Ascending aorta (tissue), 2 donors: ENCODE measurements at regions of chr4 and their contacts with region 1.

Region 1: GRCh38 chr4:119286377-119287002 is 35.4 kb downstream of the FABP2 start:
- DNase-seq: no peak
- H3K4me3 ChIP-seq: no peak overlapping the region
- H3K27ac ChIP-seq: peak overlapping the region; percentile 28 to 76
- H3K4me1 ChIP-seq: peaks cover 0 to 24% of the 10 kb centered on the region in 2 donors
- H3K27me3 ChIP-seq: no peaks in the 10 kb centered on the region
- CTCF ChIP-seq: peak; percentile 58 to 74 (median 71)

Region 2: DNA sequence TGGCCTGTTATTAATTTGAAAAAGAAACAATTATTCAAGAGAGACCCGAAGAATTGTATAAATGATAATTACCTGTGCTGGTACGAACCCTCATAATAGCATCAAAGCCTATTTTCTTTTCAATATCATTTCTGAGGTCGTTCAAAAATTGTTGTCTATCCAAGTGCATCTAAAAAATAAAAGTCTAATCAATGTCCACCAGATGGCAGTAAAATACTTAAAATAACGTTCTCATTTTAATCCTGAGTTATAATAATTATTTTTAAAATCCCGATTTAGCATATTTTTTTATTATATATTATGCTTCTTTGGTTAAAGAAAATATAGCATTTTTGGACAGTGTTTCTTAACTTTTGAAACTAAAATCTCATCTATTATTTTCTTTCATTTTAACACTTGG is 545.6 kb before region 1 on chr4:
- intact Hi-C with region 1: loop called (anchors 10 kb)
- DNase-seq: no peak
- H3K4me3 ChIP-seq: peak overlapping the region in 1 of 2 donors; percentile 36
- H3K27ac ChIP-seq: peak overlapping the region; percentile 29 to 50
- H3K4me1 ChIP-seq: peaks cover 0 to 9% of the 10 kb centered on the region in 2 donors
- H3K27me3 ChIP-seq: no peaks in the 10 kb centered on the region
- CTCF ChIP-seq: peak; percentile 45 to 54 (median 50)

Region 3: GRCh38 chr4:118883861-118884260 is 402.6 kb before region 1 on chr4:
- intact Hi-C with region 1: no loop called
- DNase-seq: no peak
- H3K4me3 ChIP-seq: no peak overlapping the region
- H3K27ac ChIP-seq: no peak overlapping the region
- H3K4me1 ChIP-seq: no peaks in the 10 kb centered on the region
- H3K27me3 ChIP-seq: no peaks in the 10 kb centered on the region
- CTCF ChIP-seq: peak in 1 of 3 experiments; percentile 20

Region 4: GRCh38 chr4:118981839-118982381 is 304.6 kb before region 1 on chr4:
- intact Hi-C with region 1: loop called (anchors 1 kb)
- DNase-seq: peak in 1 of 2 donors; percentile 89
- H3K4me3 ChIP-seq: no peak overlapping the region
- H3K27ac ChIP-seq: peak overlapping the region; percentile 95 to 96
- H3K4me1 ChIP-seq: peaks cover 30 to 65% of the 10 kb centered on the region in 2 donors
- H3K27me3 ChIP-seq: no peaks in the 10 kb centered on the region
- CTCF ChIP-seq: peak; percentile 68 to 90 (median 82)

Region 5: DNA sequence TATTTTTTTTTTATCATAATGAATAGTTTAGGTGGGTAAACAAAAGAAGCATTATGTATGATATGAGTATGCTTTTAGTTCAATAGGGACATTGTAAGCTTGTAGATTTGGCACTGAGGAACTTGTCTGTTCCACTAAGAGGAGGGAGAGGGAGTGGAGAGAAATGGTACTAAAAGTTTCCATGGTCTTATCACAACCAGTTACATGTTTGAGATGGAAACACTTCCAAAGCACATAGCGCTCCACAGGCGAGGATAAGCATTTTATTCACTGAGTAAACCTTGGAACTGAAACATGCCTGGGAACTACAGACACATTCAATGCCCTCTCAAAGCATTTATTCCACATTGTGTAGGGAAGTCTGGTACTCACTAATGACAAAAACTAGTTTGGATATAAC is 135.3 kb before region 1 on chr4:
- intact Hi-C with region 1: loop called (anchors 5 kb)
- DNase-seq: no peak
- H3K4me3 ChIP-seq: no peak overlapping the region
- H3K27ac ChIP-seq: peak overlapping the region; percentile 14 to 30
- H3K4me1 ChIP-seq: peaks cover 0 to 2% of the 10 kb centered on the region in 2 donors
- H3K27me3 ChIP-seq: no peaks in the 10 kb centered on the region
- CTCF ChIP-seq: peak in 1 of 3 experiments; percentile 21

Region 6: DNA sequence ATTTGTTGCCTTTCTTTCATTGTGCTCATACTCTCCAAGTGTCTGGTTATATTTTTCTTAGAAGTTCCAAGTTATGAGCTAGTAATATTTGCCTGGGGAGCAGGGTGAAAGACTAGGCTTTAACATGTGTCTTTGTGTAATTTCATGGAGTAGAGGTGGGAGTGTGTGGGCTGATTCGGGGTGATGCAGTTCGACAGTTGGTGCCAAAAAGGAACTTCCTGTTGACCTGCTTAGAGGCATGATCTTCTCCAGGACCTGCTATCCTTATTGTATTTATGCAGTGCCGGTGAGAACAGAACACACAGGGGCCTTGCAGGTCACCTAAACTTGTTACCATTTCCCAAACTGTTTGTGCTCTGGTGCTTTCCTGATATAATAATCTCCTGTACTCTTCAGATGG is 52.7 kb before region 1 on chr4:
- intact Hi-C with region 1: loop called (anchors 5 kb)
- DNase-seq: no peak
- H3K4me3 ChIP-seq: no peak overlapping the region
- H3K27ac ChIP-seq: peak overlapping the region; percentile 27 to 35
- H3K4me1 ChIP-seq: peaks cover 0 to 16% of the 10 kb centered on the region in 2 donors
- H3K27me3 ChIP-seq: no peaks in the 10 kb centered on the region
- CTCF ChIP-seq: no peak

Region 7: GRCh38 chr4:119646347-119647071 is 360.0 kb after region 1 on chr4:
- intact Hi-C with region 1: no loop called
- DNase-seq: no peak
- H3K4me3 ChIP-seq: no peak overlapping the region
- H3K27ac ChIP-seq: peak overlapping the region in 1 of 2 donors; percentile 20
- H3K4me1 ChIP-seq: peaks cover 3 to 6% of the 10 kb centered on the region in 2 donors
- H3K27me3 ChIP-seq: no peaks in the 10 kb centered on the region
- CTCF ChIP-seq: no peak